AG04450 (cell line): ENCODE measurements at regions of chr7 and their contacts with region 1.

Region 1: GRCh38 chr7:11212080-11212711 is 238.5 kb downstream of the PHF14 start:
- DNase-seq: peak; percentile 41
- H3K4me3 ChIP-seq: no peak overlapping the region
- H3K27ac ChIP-seq: no peak overlapping the region
- H3K27me3 ChIP-seq: no peaks in the 10 kb centered on the region
- CTCF ChIP-seq: peak; percentile 91

Region 2: DNA sequence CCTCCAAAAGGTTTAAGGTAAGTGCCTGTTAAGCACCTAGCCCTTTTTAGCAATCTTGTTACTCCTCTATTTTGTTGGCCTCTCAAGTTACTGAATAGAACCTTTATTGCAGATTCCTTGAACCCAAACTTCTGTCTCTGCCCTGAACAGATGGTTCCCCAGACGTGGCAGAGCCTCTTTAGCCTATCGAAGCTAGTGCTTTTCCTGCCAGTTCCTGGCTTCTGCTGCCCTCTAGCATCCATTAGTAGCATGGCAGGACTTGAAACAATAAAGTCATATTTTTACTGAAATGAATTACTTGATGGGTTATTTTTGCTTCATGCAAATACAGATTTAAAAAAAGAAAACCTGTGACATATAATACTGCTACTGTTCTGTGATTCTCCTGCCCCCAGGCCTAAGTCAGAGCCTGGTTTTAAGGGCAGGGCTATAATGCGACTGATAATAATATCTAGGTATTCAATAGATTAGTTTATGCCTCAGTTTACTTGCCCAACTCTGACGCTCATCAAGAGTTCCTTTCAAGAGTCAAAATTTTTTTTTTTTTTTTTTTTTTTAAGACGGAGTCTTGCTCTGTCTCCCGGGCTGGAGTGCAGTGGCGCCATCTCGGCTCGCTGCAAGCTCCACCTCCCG is 322.8 kb before region 1 on chr7:
- CTCF ChIA-PET with region 1: interaction called, 13 read pairs
- POLR2A ChIA-PET with region 1: no interaction called
- DNase-seq: peak; percentile 8
- H3K4me3 ChIP-seq: no peak overlapping the region
- H3K27ac ChIP-seq: no peak overlapping the region
- H3K27me3 ChIP-seq: no peaks in the 10 kb centered on the region
- CTCF ChIP-seq: peak; percentile 73

Region 3: GRCh38 chr7:10939911-10940703 is 272.1 kb before region 1 on chr7:
- CTCF ChIA-PET with region 1: interaction called, 17 read pairs
- POLR2A ChIA-PET with region 1: interaction called, 9 read pairs
- DNase-seq: peak; percentile 90
- H3K4me3 ChIP-seq: peak overlapping the region; percentile 98
- H3K27ac ChIP-seq: peak overlapping the region; percentile 96
- H3K27me3 ChIP-seq: no peaks in the 10 kb centered on the region
- CTCF ChIP-seq: no peak

Region 4: DNA sequence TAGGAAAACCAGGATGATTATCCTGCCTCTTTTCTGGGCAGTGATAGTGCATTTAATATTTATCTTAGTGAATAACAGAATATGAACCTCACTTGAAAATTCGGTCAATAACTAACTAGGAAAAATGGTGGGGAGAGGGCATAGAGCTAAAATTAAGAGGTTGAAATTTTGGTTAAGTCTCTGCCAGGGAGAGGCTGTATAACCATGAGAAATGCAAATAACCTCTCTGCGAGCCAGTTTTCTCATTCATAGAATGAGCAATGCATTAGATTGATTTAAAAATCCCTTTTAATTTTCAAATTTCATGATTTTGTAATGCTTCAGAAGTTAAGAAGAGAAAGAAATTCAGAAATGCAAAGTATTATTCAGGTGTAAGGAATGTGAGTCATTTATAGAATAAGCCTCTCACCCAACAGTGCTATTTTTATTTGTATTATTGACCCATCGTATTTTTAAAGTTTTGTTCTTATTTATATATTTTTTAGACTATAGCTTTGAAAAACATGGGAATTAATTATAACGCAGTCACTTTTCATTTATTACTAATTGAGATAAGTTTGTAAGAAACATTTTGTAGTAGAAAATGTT is 133.9 kb before region 1 on chr7:
- CTCF ChIA-PET with region 1: interaction called, 14 read pairs
- POLR2A ChIA-PET with region 1: no interaction called
- DNase-seq: no peak
- H3K4me3 ChIP-seq: no peak overlapping the region
- H3K27ac ChIP-seq: no peak overlapping the region
- H3K27me3 ChIP-seq: no peaks in the 10 kb centered on the region
- CTCF ChIP-seq: no peak

Region 5: DNA sequence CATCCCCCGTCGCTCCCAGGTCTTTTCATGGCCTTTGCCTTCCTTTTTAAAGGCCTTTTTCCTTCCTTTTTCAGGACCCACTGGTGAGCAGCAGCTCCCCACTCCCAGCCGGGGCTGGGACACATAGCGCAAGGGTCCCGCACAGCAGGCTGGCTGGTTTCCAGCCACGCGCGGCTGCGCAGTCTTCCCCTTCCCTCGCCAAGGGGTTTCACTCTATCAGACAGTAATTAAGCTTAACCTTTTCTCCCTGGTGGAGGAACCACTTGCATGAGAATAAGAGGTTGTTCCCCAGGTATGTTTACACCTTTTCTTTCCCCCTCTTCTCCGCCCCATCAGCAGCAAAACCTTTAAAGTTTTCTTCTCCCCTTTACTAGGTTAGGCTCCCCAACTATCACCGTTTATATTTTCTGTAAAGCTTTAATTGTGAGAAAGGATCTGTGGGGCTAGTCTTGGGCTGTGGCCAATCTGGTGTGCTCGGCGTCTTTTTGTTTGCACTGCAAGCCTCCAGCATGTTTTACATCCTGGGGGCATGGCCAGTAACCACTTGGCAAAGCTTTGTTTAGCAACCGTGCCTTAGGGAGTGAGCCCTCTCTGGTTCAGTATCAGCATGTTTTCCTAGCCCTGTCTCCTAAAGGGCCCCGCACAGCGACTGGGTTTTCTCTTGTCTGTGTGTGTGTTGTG is 18.9 kb before region 1 on chr7:
- CTCF ChIA-PET with region 1: interaction called, 30 read pairs
- POLR2A ChIA-PET with region 1: interaction called, 3 read pairs
- DNase-seq: no peak
- H3K4me3 ChIP-seq: peak overlapping the region; percentile 48
- H3K27ac ChIP-seq: no peak overlapping the region
- H3K27me3 ChIP-seq: no peaks in the 10 kb centered on the region
- CTCF ChIP-seq: no peak

Region 6: DNA sequence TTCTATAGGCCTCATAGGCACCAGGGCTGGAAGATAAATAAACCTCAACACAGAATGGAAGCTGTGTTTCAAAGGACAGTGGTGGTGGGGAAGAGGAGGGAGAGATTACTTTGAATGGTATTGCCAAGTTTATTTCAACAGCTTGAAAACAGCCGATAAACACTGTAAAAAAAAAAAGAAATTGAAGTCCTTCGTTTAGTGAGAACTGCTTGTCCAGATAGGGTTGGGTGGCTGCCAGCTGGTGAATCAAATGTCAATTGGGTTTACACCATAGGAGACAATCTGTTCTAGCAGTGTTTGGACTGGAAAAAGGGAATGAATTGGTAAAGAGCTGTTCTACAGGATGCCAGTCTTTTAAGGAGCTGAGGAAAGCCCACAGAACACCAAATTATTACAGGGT is 16.3 kb after region 1 on chr7:
- CTCF ChIA-PET with region 1: interaction called, 14 read pairs
- POLR2A ChIA-PET with region 1: no interaction called
- DNase-seq: no peak
- H3K4me3 ChIP-seq: no peak overlapping the region
- H3K27ac ChIP-seq: no peak overlapping the region
- H3K27me3 ChIP-seq: no peaks in the 10 kb centered on the region
- CTCF ChIP-seq: no peak

Region 7: GRCh38 chr7:11281953-11282352 is 69.8 kb after region 1 on chr7:
- CTCF ChIA-PET with region 1: no interaction called
- POLR2A ChIA-PET with region 1: no interaction called
- DNase-seq: no peak
- H3K4me3 ChIP-seq: no peak overlapping the region
- H3K27ac ChIP-seq: no peak overlapping the region
- H3K27me3 ChIP-seq: no peaks in the 10 kb centered on the region
- CTCF ChIP-seq: no peak

Region 8: DNA sequence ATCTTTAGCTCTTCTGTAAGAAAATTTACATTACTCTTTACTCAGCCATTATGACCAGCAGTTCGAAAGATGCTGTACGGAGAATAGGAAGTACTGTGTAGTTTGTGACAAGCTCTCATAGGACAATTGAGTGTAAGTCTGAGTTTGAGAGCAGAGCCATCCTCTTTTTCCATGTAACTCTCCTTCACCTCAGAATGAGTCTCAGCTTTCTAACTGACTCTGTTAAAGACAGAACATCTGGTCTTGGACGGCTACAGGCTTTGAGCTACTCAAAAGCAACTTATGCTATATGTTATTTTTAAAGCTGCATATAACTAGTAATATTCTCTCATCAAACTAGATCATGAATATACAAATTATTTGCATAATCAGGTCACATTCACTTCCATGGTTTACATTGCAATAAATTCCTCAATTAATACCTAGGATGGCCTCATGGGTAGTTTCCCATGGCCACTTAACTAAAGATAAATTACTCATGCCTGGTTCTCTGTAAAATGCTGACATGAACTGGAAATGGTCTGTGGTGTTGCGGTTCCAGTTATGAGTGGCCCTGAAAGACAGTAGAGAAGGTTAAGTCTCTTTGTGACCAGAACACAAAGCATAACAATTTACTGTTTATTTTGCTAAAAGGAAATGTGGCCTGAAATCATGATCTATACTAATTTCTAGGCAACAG is 120.1 kb after region 1 on chr7:
- CTCF ChIA-PET with region 1: no interaction called
- POLR2A ChIA-PET with region 1: no interaction called
- DNase-seq: no peak
- H3K4me3 ChIP-seq: no peak overlapping the region
- H3K27ac ChIP-seq: no peak overlapping the region
- H3K27me3 ChIP-seq: no peaks in the 10 kb centered on the region
- CTCF ChIP-seq: no peak

Region 9: DNA sequence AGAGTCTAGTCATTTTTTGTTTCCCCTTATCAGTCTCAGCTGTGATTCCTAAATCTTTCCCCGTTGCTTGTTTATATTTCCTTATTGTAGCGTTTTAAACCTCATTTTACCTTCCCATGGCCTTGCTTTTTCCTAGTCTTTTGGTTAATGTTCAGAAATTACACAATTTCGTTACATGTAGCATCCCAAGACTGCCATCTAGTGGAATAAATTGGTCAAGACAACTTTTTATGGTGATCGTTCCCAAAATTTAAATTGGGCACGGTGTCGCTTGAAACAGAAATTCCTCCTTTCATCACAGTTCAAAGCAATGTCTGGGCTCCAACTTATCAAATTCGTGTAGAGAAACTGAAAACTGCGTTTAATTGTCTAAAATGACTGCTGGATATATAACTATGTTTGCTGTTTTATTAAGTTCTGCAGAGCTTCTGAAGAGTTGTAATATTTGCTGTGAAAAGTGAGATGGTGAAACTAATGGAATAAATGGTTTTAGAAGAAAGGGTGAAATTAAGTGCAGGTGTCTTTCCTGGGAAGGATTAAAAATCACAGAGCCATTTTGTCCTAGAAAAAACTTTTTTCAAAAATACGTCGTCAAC is 131.7 kb after region 1 on chr7:
- CTCF ChIA-PET with region 1: no interaction called
- POLR2A ChIA-PET with region 1: no interaction called
- DNase-seq: peak; percentile 1
- H3K4me3 ChIP-seq: no peak overlapping the region
- H3K27ac ChIP-seq: no peak overlapping the region
- H3K27me3 ChIP-seq: no peaks in the 10 kb centered on the region
- CTCF ChIP-seq: peak; percentile 78

Region 10: GRCh38 chr7:12199363-12199762 is 987.2 kb after region 1 on chr7:
- CTCF ChIA-PET with region 1: no interaction called
- POLR2A ChIA-PET with region 1: no interaction called
- DNase-seq: no peak
- H3K4me3 ChIP-seq: no peak overlapping the region
- H3K27ac ChIP-seq: no peak overlapping the region
- H3K27me3 ChIP-seq: no peaks in the 10 kb centered on the region
- CTCF ChIP-seq: no peak